Naive thymus-derived CD4-positive, alpha-beta T cell (primary cell): ENCODE measurements at regions of chr12 and their contacts with region 1.

Region 1: DNA sequence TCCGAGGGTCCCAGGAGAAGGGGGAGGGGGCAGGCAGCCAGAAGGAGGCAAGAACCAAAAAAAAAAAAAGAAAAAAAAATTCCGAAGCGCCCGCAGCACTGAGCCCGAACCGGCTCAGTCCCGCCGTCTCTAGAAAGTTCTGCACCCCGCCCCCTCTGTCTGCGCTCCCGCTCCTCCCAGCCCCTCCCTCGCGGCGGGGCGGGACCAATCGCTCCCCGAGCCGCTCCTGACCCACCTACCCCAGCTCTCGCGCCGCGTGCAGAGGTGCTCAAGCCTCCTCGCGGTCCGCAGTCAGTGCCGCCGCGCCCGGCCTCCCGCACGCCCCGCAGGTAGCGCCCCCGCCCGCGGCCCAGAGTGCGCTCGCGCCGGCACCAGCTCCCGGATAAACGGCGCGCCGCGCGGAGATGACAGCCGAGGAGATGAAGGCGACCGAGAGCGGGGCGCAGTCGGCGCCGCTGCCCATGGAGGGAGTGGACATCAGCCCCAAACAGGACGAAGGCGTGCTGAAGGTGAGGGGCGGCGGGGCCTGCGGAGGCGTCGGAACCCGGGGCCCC is at the start of gene FKBP4:
- DNase-seq: peak; percentile 77 to 92 (median 86)
- ATAC-seq: peak; percentile 95
- H3K4me3 ChIP-seq: peak within 1 kb of the TSS; percentile 95
- H3K4me3 Mint-ChIP-seq: peak within 1 kb of the TSS; percentile 88 to 97 (median 94)
- H3K27ac ChIP-seq: peak within 1 kb of the TSS; percentile 73
- H3K27ac Mint-ChIP-seq: peak within 1 kb of the TSS; percentile 48 to 93 (median 84)
- H3K4me1 ChIP-seq: peaks cover 8 to 11% of the 10 kb centered on the region in 2 donors
- H3K4me1 Mint-ChIP-seq: peaks cover 17 to 37% (median 31%) of the 10 kb centered on the region in 7 donors
- H3K27me3 ChIP-seq: no peaks in the 10 kb centered on the region
- H3K27me3 Mint-ChIP-seq: peaks cover 0 to 21% (median 0%) of the 10 kb centered on the region in 5 donors
- total RNA-seq, gene FKBP4: 47.4 to 95.4 (median 54.6) TPM

Region 2: DNA sequence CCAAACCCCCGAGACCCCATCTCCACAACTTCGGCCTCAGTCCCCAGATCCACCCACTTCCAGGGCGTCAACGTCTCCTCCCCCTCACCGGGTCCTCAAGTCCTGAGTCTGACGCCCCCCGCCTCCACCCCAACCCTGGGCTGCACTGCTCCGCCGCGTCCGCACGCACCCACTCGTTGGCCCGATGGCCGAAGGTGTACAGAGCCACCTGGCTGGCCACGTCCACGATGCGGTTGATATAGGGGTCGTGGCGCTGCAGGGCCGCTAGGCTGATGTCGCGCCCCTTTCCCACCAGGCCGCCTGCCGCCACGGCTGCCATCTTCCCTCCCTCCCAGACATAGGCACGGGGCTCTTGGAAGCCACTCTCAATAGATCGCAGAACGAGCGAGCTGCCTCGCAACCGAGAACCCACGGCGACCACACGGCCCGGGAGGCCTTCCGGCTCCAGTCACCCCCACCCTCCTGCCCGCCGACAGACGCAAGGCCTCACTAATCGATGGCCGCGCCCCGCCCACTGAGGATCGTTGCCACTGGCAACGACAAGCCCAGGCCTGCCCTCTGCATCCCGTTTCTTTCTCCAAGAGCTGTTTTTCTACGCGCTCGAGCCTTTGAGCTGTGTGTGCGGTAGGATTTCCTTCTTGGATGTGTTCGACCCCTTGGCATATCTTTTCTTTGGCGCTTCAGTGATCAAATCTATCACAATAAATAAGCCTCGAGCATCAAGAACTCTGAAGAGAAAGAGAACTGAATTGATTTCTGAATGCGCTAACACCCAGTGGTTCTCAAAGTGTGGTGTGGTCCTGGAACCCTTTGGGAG is 790.5 kb before region 1 on chr12 and contains the start of gene DCP1B:
- CTCF ChIA-PET with region 1: no interaction called
- POLR2A ChIA-PET with region 1: interaction called, 3 read pairs
- intact Hi-C with region 1: loop called in 1 of 2 experiments (anchors 5 kb)
- DNase-seq: peak; percentile 76 to 93 (median 90)
- ATAC-seq: peak; percentile 99
- H3K4me3 ChIP-seq: peak within 1 kb of the TSS; percentile 80
- H3K4me3 Mint-ChIP-seq: peak within 1 kb of the TSS; percentile 92 to 100 (median 97)
- H3K27ac ChIP-seq: peak within 1 kb of the TSS; percentile 80
- H3K27ac Mint-ChIP-seq: peak within 1 kb of the TSS; percentile 93 to 99 (median 97)
- H3K4me1 ChIP-seq: peaks cover 10 to 18% of the 10 kb centered on the region in 2 donors
- H3K4me1 Mint-ChIP-seq: peaks cover 15 to 44% (median 36%) of the 10 kb centered on the region in 7 donors
- H3K27me3 ChIP-seq: no peaks in the 10 kb centered on the region
- H3K27me3 Mint-ChIP-seq: peaks cover 0 to 6% (median 0%) of the 10 kb centered on the region in 5 donors
- total RNA-seq, gene DCP1B: 8.1 to 19.7 (median 15.5) TPM

Region 3: GRCh38 chr12:2467447-2468195 is 327.2 kb before region 1 on chr12:
- CTCF ChIA-PET with region 1: no interaction called
- POLR2A ChIA-PET with region 1: no interaction called
- intact Hi-C with region 1: no loop called
- DNase-seq: no peak
- ATAC-seq: no peak
- H3K4me3 ChIP-seq: no peak overlapping the region
- H3K4me3 Mint-ChIP-seq: no peak overlapping the region
- H3K27ac ChIP-seq: no peak overlapping the region
- H3K27ac Mint-ChIP-seq: no peak overlapping the region
- H3K4me1 ChIP-seq: no peaks in the 10 kb centered on the region
- H3K4me1 Mint-ChIP-seq: no peaks in the 10 kb centered on the region
- H3K27me3 ChIP-seq: peaks cover 0 to 1% of the 10 kb centered on the region in 2 donors
- H3K27me3 Mint-ChIP-seq: peaks cover 0 to 13% (median 11%) of the 10 kb centered on the region in 5 donors

Region 4: GRCh38 chr12:2752676-2753371 is 42.0 kb before region 1 on chr12:
- CTCF ChIA-PET with region 1: no interaction called
- POLR2A ChIA-PET with region 1: no interaction called
- intact Hi-C with region 1: loop called in 1 of 2 experiments (anchors 5 kb)
- DNase-seq: peak; percentile 62 to 89 (median 80)
- ATAC-seq: peak; percentile 100
- H3K4me3 ChIP-seq: no peak overlapping the region
- H3K4me3 Mint-ChIP-seq: no peak overlapping the region
- H3K27ac ChIP-seq: no peak overlapping the region
- H3K27ac Mint-ChIP-seq: peak overlapping the region in 1 of 9 donors; percentile 23
- H3K4me1 ChIP-seq: no peaks in the 10 kb centered on the region
- H3K4me1 Mint-ChIP-seq: peaks cover 0 to 8% (median 0%) of the 10 kb centered on the region in 7 donors
- H3K27me3 ChIP-seq: no peaks in the 10 kb centered on the region
- H3K27me3 Mint-ChIP-seq: peaks cover 30 to 61% (median 44%) of the 10 kb centered on the region in 5 donors

Region 5: DNA sequence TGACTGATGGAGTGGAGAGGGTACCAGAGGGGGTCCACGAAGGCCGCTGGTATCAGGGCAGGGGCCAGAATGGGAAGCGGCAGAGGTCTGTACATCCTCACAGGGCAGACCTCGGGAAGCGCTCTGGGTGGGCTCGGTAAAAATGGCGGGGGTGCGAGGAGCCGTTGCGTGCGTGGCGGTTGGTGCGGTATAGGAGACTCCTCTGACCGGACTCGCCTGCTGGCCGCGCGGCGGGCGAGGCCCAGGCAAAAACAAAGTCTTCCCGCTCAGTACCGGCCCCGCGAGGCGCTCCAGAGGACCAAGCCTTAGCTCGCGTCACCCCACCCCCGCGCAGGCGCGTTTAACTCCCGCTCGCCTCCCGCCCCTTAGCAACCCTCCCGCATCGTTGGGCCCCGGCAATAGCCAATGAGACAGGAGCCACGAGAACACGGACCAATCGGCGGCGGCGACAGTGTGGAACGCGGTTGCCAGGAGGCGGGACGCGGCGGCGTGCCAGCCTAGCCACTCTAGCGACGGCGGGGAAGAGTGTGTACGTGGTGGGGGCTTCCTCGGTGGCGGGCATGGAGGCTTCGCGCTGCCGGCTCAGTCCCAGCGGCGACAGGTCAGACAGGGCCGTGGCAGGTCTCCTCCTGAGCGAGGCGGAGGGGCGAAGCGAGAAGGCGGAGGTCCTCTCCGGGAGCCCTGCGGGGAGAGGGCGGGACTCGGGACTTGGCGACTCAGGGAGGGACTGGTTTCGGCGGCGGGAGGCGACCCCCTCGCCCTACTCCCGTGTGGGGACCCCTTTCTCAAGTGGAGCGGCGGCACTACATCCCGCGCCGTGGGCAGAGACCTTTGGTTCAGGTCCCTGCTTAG is 95.8 kb after region 1 on chr12 and contains the start of gene TULP3:
- CTCF ChIA-PET with region 1: no interaction called
- POLR2A ChIA-PET with region 1: interaction called, 5 read pairs
- intact Hi-C with region 1: loop called (anchors 1 to 2 kb)
- DNase-seq: peak; percentile 95 to 98 (median 97)
- ATAC-seq: peak; percentile 99
- H3K4me3 ChIP-seq: peak within 1 kb of the TSS; percentile 96
- H3K4me3 Mint-ChIP-seq: peak within 1 kb of the TSS; percentile 93 to 100 (median 98)
- H3K27ac ChIP-seq: peak within 1 kb of the TSS; percentile 89
- H3K27ac Mint-ChIP-seq: peak within 1 kb of the TSS; percentile 81 to 97 (median 97)
- H3K4me1 ChIP-seq: peaks cover 3 to 8% of the 10 kb centered on the region in 2 donors
- H3K4me1 Mint-ChIP-seq: peaks cover 15 to 35% (median 31%) of the 10 kb centered on the region in 7 donors
- H3K27me3 ChIP-seq: no peaks in the 10 kb centered on the region
- H3K27me3 Mint-ChIP-seq: peaks cover 0 to 2% (median 0%) of the 10 kb centered on the region in 5 donors
- total RNA-seq, gene TULP3: 4.7 to 9.6 (median 7.4) TPM

Region 6: DNA sequence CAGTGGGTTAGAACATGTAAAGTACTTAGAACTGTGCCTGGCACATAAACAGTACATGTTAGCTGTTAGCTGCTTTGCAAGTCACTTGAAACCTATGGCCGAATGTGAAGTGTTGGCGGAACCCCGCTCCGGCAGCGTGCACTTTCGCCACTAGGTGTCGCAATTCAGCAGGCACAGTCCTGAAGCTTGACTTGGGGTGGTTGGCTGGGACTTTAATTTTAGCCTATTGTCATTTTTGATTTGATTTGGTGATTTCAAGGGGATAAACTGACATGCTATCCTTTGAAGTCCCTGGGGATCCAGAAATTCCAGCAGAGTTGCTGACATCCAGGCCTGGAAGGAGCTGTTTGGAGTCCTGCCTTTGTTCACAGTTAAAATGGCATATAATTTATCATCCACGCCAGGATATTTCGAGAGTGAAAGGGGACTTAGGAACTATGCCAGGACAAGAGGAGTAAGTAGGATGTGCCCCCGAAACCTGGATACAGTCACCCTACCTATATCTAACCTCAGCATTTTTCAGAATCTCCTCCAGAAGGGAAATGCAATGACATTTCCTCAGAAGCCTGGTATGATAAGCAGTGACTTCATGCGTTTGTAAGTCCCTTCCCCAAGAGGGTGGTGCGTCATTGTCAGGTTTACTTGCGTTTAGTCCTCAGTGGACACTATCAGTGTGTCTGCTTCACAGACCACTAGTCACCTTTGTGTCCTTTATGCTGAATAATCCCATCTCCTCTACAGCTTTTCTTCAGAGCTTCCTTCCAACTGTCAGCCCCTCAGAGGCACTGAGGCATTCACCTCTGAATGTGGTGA is 278.8 kb after region 1 on chr12:
- CTCF ChIA-PET with region 1: no interaction called
- POLR2A ChIA-PET with region 1: no interaction called
- intact Hi-C with region 1: loop called in 1 of 2 experiments (anchors 5 kb)
- DNase-seq: peak; percentile 63 to 86 (median 76)
- ATAC-seq: peak; percentile 69
- H3K4me3 ChIP-seq: no peak overlapping the region
- H3K4me3 Mint-ChIP-seq: peak overlapping the region in 2 of 10 donors; percentile 27 to 51
- H3K27ac ChIP-seq: no peak overlapping the region
- H3K27ac Mint-ChIP-seq: peak overlapping the region in 1 of 9 donors; percentile 9
- H3K4me1 ChIP-seq: peaks cover 0 to 3% of the 10 kb centered on the region in 2 donors
- H3K4me1 Mint-ChIP-seq: peaks cover 0 to 21% (median 13%) of the 10 kb centered on the region in 7 donors
- H3K27me3 ChIP-seq: peaks cover 0 to 4% of the 10 kb centered on the region in 2 donors
- H3K27me3 Mint-ChIP-seq: peaks cover 0 to 32% (median 5%) of the 10 kb centered on the region in 5 donors